Mammary epithelial cell (primary cell): ENCODE measurements at regions of chr1 and their contacts with region 1.

Region 1: GRCh38 chr1:169794530-169795416 is at the start of gene METTL18:
- DNase-seq: peak; percentile 95
- H3K4me3 ChIP-seq: peak within 1 kb of the TSS; percentile 68 to 73 (median 72)
- H3K27ac ChIP-seq: peak within 1 kb of the TSS; percentile 79
- H3K4me1 ChIP-seq: peaks cover 8% of the 10 kb centered on the region
- H3K27me3 ChIP-seq: no peaks in the 10 kb centered on the region
- CTCF ChIP-seq: no peak
- total RNA-seq, gene METTL18: 4.3 to 6.0 TPM

Region 2: DNA sequence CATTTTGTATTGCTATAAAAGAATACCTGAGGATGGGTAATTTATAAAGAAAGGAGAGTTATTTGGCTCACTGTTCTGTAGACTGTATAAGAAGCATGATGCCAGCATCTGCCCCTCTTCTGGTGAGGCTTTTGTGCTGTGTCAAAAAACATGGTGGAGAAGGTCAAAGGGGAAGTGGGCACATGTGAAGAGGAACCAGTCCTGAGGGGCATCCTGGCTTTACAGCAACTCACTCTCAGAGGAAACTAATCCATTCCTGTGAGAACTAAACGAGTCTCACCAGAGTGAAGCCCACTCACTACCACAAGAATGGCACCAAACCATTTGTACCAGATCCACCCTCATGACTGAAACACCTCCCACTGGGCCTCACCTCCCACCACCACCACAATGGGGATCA is 146.1 kb before region 1 on chr1:
- CTCF ChIA-PET with region 1: no interaction called
- dilution Hi-C with region 1: no loop called
- in situ Hi-C with region 1: no loop called
- intact Hi-C with region 1: no loop called
- DNase-seq: no peak
- H3K4me3 ChIP-seq: no peak overlapping the region
- H3K27ac ChIP-seq: no peak overlapping the region
- H3K4me1 ChIP-seq: no peaks in the 10 kb centered on the region
- H3K27me3 ChIP-seq: no peaks in the 10 kb centered on the region
- CTCF ChIP-seq: no peak

Region 3: GRCh38 chr1:169893494-169894362 is 99.0 kb after region 1 on chr1 and contains the start of gene SCYL3:
- CTCF ChIA-PET with region 1: interaction called, 3 read pairs
- dilution Hi-C with region 1: no loop called
- in situ Hi-C with region 1: no loop called
- intact Hi-C with region 1: loop called (anchors 5 kb)
- DNase-seq: peak; percentile 97
- H3K4me3 ChIP-seq: peak within 1 kb of the TSS; percentile 80 to 95 (median 86)
- H3K27ac ChIP-seq: peak within 1 kb of the TSS; percentile 99
- H3K4me1 ChIP-seq: peaks cover 20% of the 10 kb centered on the region
- H3K27me3 ChIP-seq: no peaks in the 10 kb centered on the region
- CTCF ChIP-seq: no peak
- total RNA-seq, gene SCYL3: 4.8 to 9.5 TPM